Activated CD4-positive, alpha-beta memory T cell treated with anti-CD3 and anti-CD28 coated beads for 36 hours (primary cell): ENCODE measurements at regions of chr21 and their contacts with region 1.

Region 1: DNA sequence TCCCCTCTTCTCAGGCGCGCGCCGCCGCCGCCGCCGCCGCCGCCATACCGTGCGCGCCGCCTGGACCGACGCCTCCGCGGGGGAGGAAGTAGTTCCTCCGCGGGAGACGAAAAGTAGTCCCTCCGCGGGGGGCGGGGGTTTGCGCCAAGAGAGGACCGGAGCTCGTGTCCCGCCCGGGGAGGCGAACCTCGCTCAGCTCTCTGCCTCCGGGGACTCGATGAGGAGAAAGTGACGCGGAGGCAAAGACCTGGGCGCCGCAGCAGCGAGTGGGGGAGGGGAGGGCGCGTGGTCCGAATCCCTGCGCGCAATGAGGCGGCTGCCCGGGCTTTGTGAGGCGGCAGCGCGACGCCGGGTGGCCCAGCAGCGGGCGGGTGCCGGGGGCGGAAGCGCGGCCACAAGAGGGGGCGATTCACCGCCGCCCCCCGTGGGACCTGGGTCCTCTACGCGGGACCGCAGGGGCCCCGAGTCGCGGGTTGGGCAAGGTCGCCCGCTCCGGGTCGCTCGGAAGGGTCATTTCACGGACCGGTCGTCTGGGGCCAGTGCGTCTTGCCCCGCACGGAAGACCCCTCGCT is at the start of gene BRWD1:
- DNase-seq: peak; percentile 80
- H3K4me3 Mint-ChIP-seq: peak within 1 kb of the TSS; percentile 92
- H3K27ac Mint-ChIP-seq: peak within 1 kb of the TSS; percentile 97
- H3K4me1 Mint-ChIP-seq: peaks cover 36% of the 10 kb centered on the region
- H3K27me3 Mint-ChIP-seq: no peaks in the 10 kb centered on the region
- total RNA-seq, gene BRWD1: 28.7 to 29.4 TPM

Region 2: DNA sequence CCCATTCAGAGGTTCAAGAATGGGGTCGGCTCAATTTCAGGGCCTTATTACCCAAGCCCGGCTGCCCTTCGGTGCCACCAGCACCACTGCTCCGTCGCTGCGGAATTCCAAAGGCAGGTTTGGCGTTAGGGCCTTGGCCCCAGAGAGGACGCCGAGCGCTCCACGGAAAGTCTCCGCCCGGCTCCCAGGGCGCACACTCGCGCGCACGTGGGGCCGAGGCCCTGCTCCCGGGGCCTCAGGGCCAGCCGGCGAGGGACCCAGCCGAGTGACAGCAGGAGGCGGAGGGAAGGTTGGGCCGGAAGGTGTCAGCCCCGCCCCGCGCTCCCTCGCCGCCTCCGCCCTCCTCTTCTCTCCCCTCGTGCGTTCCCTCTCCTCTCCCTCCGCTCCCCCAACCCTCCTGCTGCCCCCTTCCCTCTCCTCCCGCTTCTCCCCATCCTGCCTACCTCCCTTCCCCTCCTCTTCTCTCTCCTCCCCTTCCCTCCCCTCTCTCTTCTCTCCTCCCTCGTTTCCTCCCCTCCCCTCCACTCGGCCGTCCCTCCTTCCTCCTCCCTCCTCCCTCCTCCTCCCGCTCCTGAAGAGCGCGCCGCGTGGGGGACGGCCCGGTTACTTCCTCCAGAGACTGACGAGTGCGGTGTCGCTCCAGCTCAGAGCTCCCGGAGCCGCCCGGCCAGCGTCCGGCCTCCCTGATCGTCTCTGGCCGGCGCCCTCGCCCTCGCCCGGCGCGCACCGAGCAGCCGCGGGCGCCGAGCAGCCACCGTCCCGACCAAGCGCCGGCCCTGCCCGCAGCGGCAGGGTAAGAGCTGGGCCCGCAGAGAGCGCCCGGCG is 508.1 kb before region 1 on chr21 and contains the start of gene ETS2:
- CTCF ChIA-PET with region 1: no interaction called
- POLR2A ChIA-PET with region 1: no interaction called
- intact Hi-C with region 1: loop called (anchors 5 kb)
- DNase-seq: peak; percentile 81
- H3K4me3 Mint-ChIP-seq: peak within 1 kb of the TSS; percentile 87
- H3K27ac Mint-ChIP-seq: peak within 1 kb of the TSS; percentile 87
- H3K4me1 Mint-ChIP-seq: peaks cover 40% of the 10 kb centered on the region
- H3K27me3 Mint-ChIP-seq: peaks cover 2% of the 10 kb centered on the region
- total RNA-seq, gene ETS2: 22.1 to 25.0 TPM

Region 3: GRCh38 chr21:39238275-39238674 is 75.4 kb before region 1 on chr21:
- CTCF ChIA-PET with region 1: no interaction called
- POLR2A ChIA-PET with region 1: no interaction called
- intact Hi-C with region 1: loop called (anchors 5 kb)
- DNase-seq: no peak
- H3K4me3 Mint-ChIP-seq: no peak overlapping the region
- H3K27ac Mint-ChIP-seq: peak overlapping the region; percentile 47
- H3K4me1 Mint-ChIP-seq: peaks cover 16% of the 10 kb centered on the region
- H3K27me3 Mint-ChIP-seq: no peaks in the 10 kb centered on the region

Region 4: DNA sequence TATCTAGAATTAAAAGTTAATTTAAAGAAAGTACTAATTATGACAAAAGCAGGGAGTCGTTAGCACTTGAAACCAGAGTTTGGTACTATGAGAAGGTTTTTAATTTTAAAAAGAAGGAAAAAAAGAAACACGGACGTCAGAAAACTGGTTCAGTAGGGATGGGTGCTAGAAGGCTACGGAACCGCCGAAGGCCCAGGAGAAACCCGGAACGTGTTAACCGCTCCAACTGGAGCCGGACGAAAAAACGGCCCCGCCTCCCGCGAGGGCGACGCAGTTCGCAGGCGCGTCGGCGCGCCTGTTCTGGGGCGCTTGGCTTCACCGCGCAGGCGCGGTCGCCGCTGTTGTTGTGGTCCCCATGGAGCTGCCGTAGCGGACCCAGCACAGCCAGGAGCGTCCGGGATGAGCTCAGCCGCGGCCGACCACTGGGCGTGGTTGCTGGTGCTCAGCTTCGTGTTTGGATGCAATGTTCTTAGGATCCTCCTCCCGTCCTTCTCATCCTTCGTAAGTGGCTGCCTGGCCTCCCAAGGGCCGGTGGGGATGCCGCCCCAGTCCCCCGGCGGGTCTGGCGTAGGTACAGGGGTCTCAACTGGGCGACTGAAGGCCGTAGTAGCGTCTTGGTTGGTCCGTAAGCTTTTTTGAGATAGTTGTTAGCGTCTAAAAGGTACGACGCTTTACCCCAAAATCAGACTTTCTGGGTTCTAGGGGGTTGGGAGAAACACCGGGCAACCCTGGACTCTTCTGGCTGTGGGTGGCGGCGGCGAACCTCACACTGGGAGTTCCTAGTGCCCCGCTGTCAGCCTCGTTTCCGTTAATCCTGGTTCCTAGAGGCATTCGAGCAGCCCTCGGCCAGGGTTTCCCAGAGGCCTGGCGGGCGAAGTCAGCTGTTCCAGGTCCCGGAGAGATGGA is 66.6 kb after region 1 on chr21:
- CTCF ChIA-PET with region 1: interaction called, 3 read pairs
- POLR2A ChIA-PET with region 1: interaction called, 8 read pairs
- intact Hi-C with region 1: loop called (anchors 2 kb)
- DNase-seq: peak; percentile 96
- H3K4me3 Mint-ChIP-seq: peak overlapping the region; percentile 91
- H3K27ac Mint-ChIP-seq: peak overlapping the region; percentile 80
- H3K4me1 Mint-ChIP-seq: peaks cover 24% of the 10 kb centered on the region
- H3K27me3 Mint-ChIP-seq: peaks cover 2% of the 10 kb centered on the region

Region 5: GRCh38 chr21:39445321-39446269 is 131.9 kb after region 1 on chr21 and contains the start of gene LCA5L:
- CTCF ChIA-PET with region 1: no interaction called
- POLR2A ChIA-PET with region 1: no interaction called
- intact Hi-C with region 1: loop called (anchors 1 kb)
- DNase-seq: peak; percentile 93
- H3K4me3 Mint-ChIP-seq: peak within 1 kb of the TSS; percentile 84
- H3K27ac Mint-ChIP-seq: peak within 1 kb of the TSS; percentile 92
- H3K4me1 Mint-ChIP-seq: peaks cover 13% of the 10 kb centered on the region
- H3K27me3 Mint-ChIP-seq: peaks cover 4% of the 10 kb centered on the region
- total RNA-seq, gene LCA5L: 0.22 to 0.36 TPM